Activated B cell treated with CpG ODN at 0.5 μM for 24 hours (primary cell): ENCODE measurements at regions of chr7 and their contacts with region 1.

Region 1: DNA sequence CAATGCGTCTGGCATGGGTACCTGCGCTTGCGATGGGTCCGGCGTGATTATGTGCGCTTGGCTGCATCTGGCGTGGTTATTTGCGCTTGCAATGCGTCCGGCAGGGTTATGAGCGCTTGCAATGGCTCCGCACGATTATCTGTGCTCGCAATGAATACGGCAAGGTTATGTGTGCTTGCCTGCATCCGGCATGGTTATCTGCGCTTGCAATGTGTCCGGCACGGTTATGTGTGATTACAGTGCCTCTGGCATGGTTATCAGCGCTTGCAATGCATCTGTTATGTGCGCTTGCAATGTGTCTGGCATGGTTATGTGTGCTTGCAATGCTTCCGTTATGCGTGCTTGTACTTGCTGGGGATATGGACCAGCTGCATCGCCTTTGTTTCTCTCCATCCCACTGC is 37.7 kb downstream of the RBAK start:
- DNase-seq: no peak
- ATAC-seq: no peak
- H3K4me3 Mint-ChIP-seq: no peak overlapping the region
- H3K27ac Mint-ChIP-seq: no peak overlapping the region
- H3K4me1 Mint-ChIP-seq: no peaks in the 10 kb centered on the region
- H3K27me3 Mint-ChIP-seq: peaks cover 4% of the 10 kb centered on the region
- CTCF ChIP-seq: no peak

Region 2: GRCh38 chr7:4791738-4792536 is 291.4 kb before region 1 on chr7:
- CTCF ChIA-PET with region 1: interaction called, 35 read pairs
- POLR2A ChIA-PET with region 1: no interaction called
- intact Hi-C with region 1: loop called (anchors 1 kb)
- DNase-seq: peak; percentile 80
- ATAC-seq: peak; percentile 91
- H3K4me3 Mint-ChIP-seq: no peak overlapping the region
- H3K27ac Mint-ChIP-seq: no peak overlapping the region
- H3K4me1 Mint-ChIP-seq: peaks cover 4% of the 10 kb centered on the region
- H3K27me3 Mint-ChIP-seq: no peaks in the 10 kb centered on the region
- CTCF ChIP-seq: no peak

Region 3: GRCh38 chr7:4797858-4798705 is 285.2 kb before region 1 on chr7:
- CTCF ChIA-PET with region 1: interaction called, 35 read pairs
- POLR2A ChIA-PET with region 1: no interaction called
- intact Hi-C with region 1: loop called (anchors 1 kb)
- DNase-seq: peak; percentile 69
- ATAC-seq: peak; percentile 96
- H3K4me3 Mint-ChIP-seq: no peak overlapping the region
- H3K27ac Mint-ChIP-seq: no peak overlapping the region
- H3K4me1 Mint-ChIP-seq: no peaks in the 10 kb centered on the region
- H3K27me3 Mint-ChIP-seq: no peaks in the 10 kb centered on the region
- CTCF ChIP-seq: peak; percentile 24

Region 4: DNA sequence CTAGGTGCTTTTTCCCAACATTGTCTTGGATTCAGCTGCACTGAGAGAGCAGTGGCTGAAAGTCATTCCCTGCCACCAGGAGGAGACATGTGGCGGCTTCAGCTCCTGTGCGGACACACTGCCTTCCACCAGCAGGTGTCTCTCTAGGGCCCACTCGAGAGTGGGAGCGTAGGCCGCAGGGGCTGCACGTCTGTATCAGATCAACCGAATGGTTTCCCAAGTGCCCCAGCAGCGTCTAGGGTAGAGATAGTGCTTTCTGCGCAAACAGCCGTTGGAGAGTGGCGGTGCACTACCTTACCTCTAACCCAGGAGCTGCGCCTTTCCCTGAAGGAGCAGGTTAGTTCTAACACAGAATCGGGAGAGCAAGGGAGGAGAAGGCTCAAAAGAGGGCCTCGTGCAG is 253.1 kb before region 1 on chr7:
- CTCF ChIA-PET with region 1: interaction called, 14 read pairs
- POLR2A ChIA-PET with region 1: no interaction called
- intact Hi-C with region 1: no loop called
- DNase-seq: peak; percentile 32
- ATAC-seq: peak; percentile 69
- H3K4me3 Mint-ChIP-seq: no peak overlapping the region
- H3K27ac Mint-ChIP-seq: no peak overlapping the region
- H3K4me1 Mint-ChIP-seq: peaks cover 4% of the 10 kb centered on the region
- H3K27me3 Mint-ChIP-seq: no peaks in the 10 kb centered on the region
- CTCF ChIP-seq: no peak

Region 5: DNA sequence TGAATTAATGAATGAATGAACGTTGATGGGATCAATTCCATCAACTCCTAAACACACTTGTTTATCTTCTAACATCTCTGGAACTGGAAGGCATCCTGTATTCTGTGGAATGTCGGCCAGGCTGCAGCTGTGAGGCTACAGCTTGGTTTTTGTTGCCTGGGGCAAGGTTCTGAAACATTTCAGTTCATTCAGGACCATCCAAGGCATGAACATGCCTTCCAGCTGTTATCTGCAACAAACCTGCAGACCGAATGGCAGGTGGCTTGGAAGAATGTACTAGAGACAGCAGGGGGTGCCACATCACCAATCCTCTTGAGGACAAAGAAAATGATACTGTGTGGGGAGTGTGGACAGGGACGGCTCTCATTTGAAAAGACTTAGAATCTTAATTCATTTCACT is 233.9 kb before region 1 on chr7:
- CTCF ChIA-PET with region 1: interaction called, 5 read pairs
- POLR2A ChIA-PET with region 1: no interaction called
- intact Hi-C with region 1: loop called (anchors 1 kb)
- DNase-seq: no peak
- ATAC-seq: no peak
- H3K4me3 Mint-ChIP-seq: no peak overlapping the region
- H3K27ac Mint-ChIP-seq: no peak overlapping the region
- H3K4me1 Mint-ChIP-seq: peaks cover 5% of the 10 kb centered on the region
- H3K27me3 Mint-ChIP-seq: peaks cover 15% of the 10 kb centered on the region
- CTCF ChIP-seq: no peak

Region 6: DNA sequence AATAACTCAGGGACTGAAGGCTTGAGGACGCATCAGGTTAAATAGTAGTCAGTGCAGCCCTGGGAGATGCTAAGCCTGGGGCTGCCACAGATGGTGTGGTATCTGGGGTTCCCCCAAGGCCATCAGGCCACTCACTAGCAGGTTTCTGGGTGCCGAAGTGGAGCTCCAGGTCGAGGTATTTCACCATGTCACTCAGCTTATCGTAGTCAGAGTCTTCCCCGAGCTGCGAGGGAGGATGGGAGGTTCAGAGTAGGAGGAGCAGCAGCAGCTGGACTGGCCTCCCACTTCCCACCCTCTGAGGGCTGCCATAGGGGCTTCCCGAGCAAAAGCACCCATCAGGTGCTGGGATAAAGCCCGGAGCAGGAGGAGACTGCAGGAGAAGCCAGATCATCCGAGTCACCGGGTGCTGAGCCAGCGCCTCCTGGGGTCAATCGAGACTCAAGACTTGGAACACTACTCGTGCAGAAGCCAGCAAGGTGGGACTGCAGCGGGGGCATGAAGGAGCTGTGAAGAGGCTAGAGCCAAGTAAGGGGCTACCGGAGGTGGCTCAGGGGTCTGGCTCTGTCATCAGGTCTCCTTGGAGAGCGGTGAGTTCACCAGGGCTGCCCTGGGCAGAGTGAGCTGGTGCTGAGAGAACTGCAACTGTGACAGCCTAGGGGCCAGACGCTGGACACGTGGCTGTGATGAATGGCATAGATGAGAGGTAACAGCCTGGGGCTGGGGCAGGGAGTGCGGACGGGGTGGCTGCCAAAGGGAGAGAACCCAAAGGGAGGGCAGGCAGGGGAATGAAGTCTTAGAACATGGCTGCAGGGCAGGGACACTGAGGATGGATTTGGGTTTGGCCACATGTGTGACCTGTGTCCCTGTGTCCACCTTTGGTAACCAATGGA is 1422.6 kb after region 1 on chr7:
- CTCF ChIA-PET with region 1: no interaction called
- POLR2A ChIA-PET with region 1: no interaction called
- intact Hi-C with region 1: no loop called
- DNase-seq: no peak
- ATAC-seq: no peak
- H3K4me3 Mint-ChIP-seq: peak overlapping the region; percentile 28
- H3K27ac Mint-ChIP-seq: no peak overlapping the region
- H3K4me1 Mint-ChIP-seq: peaks cover 9% of the 10 kb centered on the region
- H3K27me3 Mint-ChIP-seq: no peaks in the 10 kb centered on the region
- CTCF ChIP-seq: no peak